ENCODE measurements at regions of chr20 and their contacts with region 1.

Region 1: GRCh38 chr20:6692568-6693173 is 74.8 kb upstream of the BMP2 start:
- DNase-seq: peak; percentile 45 to 51
- H3K4me3 ChIP-seq: no peak overlapping the region
- H3K4me3 Mint-ChIP-seq: no peak overlapping the region
- H3K27ac Mint-ChIP-seq: peak overlapping the region; percentile 99
- H3K4me1 ChIP-seq: peaks cover 55% of the 10 kb centered on the region
- H3K4me1 Mint-ChIP-seq: peaks cover 65% of the 10 kb centered on the region
- H3K27me3 ChIP-seq: no peaks in the 10 kb centered on the region
- H3K27me3 Mint-ChIP-seq: no peaks in the 10 kb centered on the region
- CTCF ChIP-seq: no peak

Region 2: GRCh38 chr20:5749952-5750779 is 942.5 kb before region 1 on chr20 and contains the start of gene SHLD1:
- CTCF ChIA-PET with region 1: no interaction called
- POLR2A ChIA-PET with region 1: no interaction called
- intact Hi-C with region 1: no loop called
- DNase-seq: peak; percentile 90 to 92
- H3K4me3 ChIP-seq: peak within 1 kb of the TSS; percentile 55
- H3K4me3 Mint-ChIP-seq: peak within 1 kb of the TSS; percentile 74
- H3K27ac Mint-ChIP-seq: peak within 1 kb of the TSS; percentile 89
- H3K4me1 ChIP-seq: peaks cover 71% of the 10 kb centered on the region
- H3K4me1 Mint-ChIP-seq: peaks cover 40% of the 10 kb centered on the region
- H3K27me3 ChIP-seq: no peaks in the 10 kb centered on the region
- H3K27me3 Mint-ChIP-seq: no peaks in the 10 kb centered on the region
- CTCF ChIP-seq: no peak
- total RNA-seq, gene SHLD1: 4.8 and 5.4 TPM in 2 replicates

Region 3: GRCh38 chr20:6515261-6515660 is 177.4 kb before region 1 on chr20:
- CTCF ChIA-PET with region 1: no interaction called
- POLR2A ChIA-PET with region 1: no interaction called
- intact Hi-C with region 1: no loop called
- DNase-seq: no peak
- H3K4me3 ChIP-seq: no peak overlapping the region
- H3K4me3 Mint-ChIP-seq: no peak overlapping the region
- H3K27ac Mint-ChIP-seq: no peak overlapping the region
- H3K4me1 ChIP-seq: no peaks in the 10 kb centered on the region
- H3K4me1 Mint-ChIP-seq: no peaks in the 10 kb centered on the region
- H3K27me3 ChIP-seq: no peaks in the 10 kb centered on the region
- H3K27me3 Mint-ChIP-seq: no peaks in the 10 kb centered on the region
- CTCF ChIP-seq: no peak

Region 4: GRCh38 chr20:6665621-6666345 is 26.9 kb before region 1 on chr20:
- CTCF ChIA-PET with region 1: no interaction called
- POLR2A ChIA-PET with region 1: no interaction called
- intact Hi-C with region 1: no loop called
- DNase-seq: peak; percentile 42 to 51
- H3K4me3 ChIP-seq: no peak overlapping the region
- H3K4me3 Mint-ChIP-seq: no peak overlapping the region
- H3K27ac Mint-ChIP-seq: peak overlapping the region; percentile 56
- H3K4me1 ChIP-seq: peaks cover 36% of the 10 kb centered on the region
- H3K4me1 Mint-ChIP-seq: peaks cover 34% of the 10 kb centered on the region
- H3K27me3 ChIP-seq: no peaks in the 10 kb centered on the region
- H3K27me3 Mint-ChIP-seq: no peaks in the 10 kb centered on the region
- CTCF ChIP-seq: no peak

Region 5: DNA sequence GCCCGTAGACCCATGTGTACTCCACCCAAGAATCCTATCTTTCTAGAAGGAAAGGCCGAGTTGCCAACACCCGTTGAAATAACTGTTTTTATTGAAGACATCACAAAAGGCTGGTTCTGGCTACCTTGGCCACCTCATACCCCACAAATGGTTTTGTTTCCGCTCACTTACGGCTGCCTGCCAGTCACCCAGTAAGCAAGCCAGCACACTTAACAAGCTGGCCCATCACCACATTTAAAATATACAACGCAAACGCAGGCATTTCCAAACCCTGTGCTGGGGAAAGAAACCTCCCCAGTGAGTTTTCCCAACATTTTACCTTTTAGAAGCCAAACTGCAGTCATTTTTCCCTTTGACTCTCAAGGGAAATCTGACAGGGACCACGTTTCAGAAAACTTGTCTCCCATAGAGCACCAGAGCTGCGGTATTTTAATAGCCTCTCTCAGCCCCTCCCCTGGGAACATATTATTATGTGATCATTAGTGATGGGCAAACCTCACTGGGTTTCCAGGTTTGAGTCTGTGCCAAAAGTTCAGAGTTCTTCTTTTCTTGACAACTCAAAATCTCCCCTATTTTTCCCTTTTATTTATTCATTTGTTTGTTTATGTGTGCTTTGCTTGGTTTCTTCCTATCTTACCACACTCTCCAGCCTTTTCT is 38.1 kb after region 1 on chr20:
- CTCF ChIA-PET with region 1: no interaction called
- POLR2A ChIA-PET with region 1: no interaction called
- intact Hi-C with region 1: no loop called
- DNase-seq: no peak
- H3K4me3 ChIP-seq: no peak overlapping the region
- H3K4me3 Mint-ChIP-seq: no peak overlapping the region
- H3K27ac Mint-ChIP-seq: no peak overlapping the region
- H3K4me1 ChIP-seq: peaks cover 3% of the 10 kb centered on the region; the same call in 1 of the 2 replicates
- H3K4me1 Mint-ChIP-seq: peaks cover 10% of the 10 kb centered on the region
- H3K27me3 ChIP-seq: no peaks in the 10 kb centered on the region
- H3K27me3 Mint-ChIP-seq: no peaks in the 10 kb centered on the region
- CTCF ChIP-seq: no peak

Region 6: DNA sequence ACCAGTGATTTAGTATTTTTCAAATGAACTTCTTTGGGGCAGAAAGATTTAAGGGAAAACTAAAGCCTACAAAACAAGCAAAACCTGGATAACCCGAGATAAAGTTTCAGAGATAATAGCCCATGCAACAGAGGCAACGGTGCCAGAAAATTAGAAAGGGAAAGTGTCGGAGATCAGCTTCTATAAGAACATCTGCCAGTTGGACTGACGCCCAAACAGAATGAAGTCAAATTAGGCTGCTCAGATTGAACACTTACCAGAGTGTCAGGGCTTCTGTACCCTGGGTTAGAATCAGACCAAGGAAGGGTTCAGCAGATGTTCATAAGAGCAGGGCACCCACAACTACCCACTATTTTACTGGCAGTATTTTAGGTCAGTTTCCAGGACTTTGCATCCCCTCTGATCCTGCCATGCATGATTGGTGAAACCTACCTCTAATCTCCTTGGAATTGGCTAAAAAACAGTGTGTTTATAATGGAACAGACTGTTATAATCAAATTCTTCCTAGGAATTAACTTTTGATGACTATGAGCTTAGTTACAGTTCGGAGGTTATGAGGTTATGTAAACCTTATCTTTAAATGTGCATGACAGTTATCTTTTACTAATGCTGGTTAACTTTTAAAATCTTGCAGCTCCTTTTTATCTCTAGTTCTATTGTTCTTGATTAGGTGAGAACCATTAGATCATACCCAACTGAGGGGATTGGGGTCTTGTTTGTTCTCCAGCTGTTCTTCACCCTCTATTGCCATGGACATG is 87.9 kb after region 1 on chr20:
- CTCF ChIA-PET with region 1: no interaction called
- POLR2A ChIA-PET with region 1: interaction called, 13 read pairs
- intact Hi-C with region 1: no loop called
- DNase-seq: no peak
- H3K4me3 ChIP-seq: no peak overlapping the region
- H3K4me3 Mint-ChIP-seq: no peak overlapping the region
- H3K27ac Mint-ChIP-seq: no peak overlapping the region
- H3K4me1 ChIP-seq: no peaks in the 10 kb centered on the region
- H3K4me1 Mint-ChIP-seq: peaks cover 7% of the 10 kb centered on the region
- H3K27me3 ChIP-seq: no peaks in the 10 kb centered on the region
- H3K27me3 Mint-ChIP-seq: no peaks in the 10 kb centered on the region
- CTCF ChIP-seq: no peak

Measured in Caco-2 (cell line).